AG04449 (cell line): ENCODE measurements at regions of chr10 and their contacts with region 1.

Region 1: GRCh38 chr10:119368991-119369869 is 161.9 kb downstream of the GRK5 start:
- DNase-seq: no peak
- H3K4me3 ChIP-seq: no peak overlapping the region
- CTCF ChIP-seq: no peak

Region 2: DNA sequence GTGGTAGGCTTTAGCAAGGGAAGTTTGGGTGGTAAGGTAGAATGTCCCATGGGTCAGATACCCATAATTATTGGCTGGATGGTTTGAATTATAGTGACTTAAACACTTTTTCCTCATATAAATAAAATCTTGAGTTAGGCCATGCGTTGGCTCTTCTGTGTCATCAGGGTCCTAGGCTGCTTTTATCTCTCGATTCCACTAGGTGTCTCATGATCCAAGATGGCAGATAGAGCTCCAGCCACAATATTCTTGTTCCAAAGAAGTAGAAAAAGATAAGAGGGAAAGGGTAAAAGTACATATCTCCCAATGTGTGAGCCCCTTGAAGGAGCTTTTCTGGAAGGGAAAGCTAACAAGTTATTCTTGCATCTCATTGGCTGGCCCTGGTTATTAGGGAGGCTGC is 17.2 kb before region 1 on chr10:
- CTCF ChIA-PET with region 1: interaction called, 12 read pairs
- POLR2A ChIA-PET with region 1: no interaction called
- DNase-seq: no peak
- H3K4me3 ChIP-seq: no peak overlapping the region
- CTCF ChIP-seq: no peak

Region 3: DNA sequence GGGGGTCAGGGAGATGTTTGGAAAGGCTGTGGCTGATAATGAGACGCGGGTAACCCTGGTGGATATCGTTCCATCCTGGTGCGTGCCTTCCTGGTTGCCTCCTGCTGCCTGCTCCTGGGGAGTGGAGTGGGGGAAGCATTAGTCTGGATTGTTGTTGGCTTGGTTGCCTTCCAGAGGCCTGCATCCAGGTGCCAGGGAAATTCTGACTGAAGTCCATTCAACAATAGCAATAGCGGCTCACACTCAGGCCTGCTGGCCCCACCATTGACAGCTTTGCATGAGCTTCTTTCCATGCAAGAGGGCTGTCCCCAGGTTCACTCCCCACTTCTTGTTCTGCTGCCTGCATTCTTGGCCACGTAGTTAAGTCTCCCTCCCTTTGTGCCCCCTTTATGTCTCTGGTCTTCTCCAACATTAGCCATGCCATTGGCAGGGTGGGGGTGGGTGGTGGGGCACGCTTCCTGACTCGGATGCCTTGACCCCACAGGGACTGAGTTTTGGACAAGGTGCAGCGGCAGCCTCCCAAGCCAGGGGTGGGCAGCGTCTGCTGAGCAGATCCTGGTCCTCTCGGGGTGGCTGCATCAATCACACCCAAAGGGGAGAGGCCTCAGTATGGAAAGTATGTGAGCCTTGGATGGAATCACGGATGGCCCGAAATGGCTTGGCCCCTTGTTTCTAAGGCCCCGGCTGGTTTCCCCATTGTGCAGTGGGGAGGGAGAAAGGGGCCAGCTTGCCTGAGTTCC is 11.6 kb before region 1 on chr10:
- CTCF ChIA-PET with region 1: interaction called, 12 read pairs
- POLR2A ChIA-PET with region 1: no interaction called
- DNase-seq: no peak
- H3K4me3 ChIP-seq: no peak overlapping the region
- CTCF ChIP-seq: no peak

Region 4: GRCh38 chr10:119401671-119402395 is 32.6 kb after region 1 on chr10:
- CTCF ChIA-PET with region 1: no interaction called
- POLR2A ChIA-PET with region 1: interaction called, 10 read pairs
- DNase-seq: peak; percentile 74
- H3K4me3 ChIP-seq: no peak overlapping the region
- CTCF ChIP-seq: no peak

Region 5: GRCh38 chr10:119449760-119450461 is 80.7 kb after region 1 on chr10:
- CTCF ChIA-PET with region 1: no interaction called
- POLR2A ChIA-PET with region 1: no interaction called
- DNase-seq: peak; percentile 73
- H3K4me3 ChIP-seq: no peak overlapping the region; the same call in 1 of the 2 replicates
- CTCF ChIP-seq: no peak